HCT116 (cell line): ENCODE measurements at regions of chrX and their contacts with region 1.

Region 1: DNA sequence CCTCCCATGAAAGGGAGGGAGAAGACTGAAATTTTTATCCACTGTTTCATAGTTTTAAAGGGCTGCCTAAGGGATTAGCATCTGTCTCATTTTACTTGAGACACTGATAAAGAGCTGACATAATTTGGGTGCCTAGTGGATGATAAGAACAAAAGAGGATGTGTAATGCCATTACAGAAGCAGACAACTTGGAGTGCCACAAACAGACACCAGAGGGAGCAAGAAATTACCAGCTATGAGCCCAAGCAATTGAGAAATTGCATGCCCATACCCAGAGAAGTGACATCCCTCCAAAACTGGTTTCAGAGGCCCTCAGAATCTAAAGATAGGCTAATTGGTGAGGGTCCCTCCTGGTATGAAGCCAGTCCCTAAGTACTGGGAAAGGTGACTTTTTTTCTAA is 38.5 kb upstream of the POU3F4 start:
- DNase-seq: no peak
- ATAC-seq: no peak
- H3K4me3 ChIP-seq: no peak overlapping the region
- H3K27ac ChIP-seq: no peak overlapping the region
- H3K4me1 ChIP-seq: no peaks in the 10 kb centered on the region
- H3K27me3 ChIP-seq: no peaks in the 10 kb centered on the region
- CTCF ChIP-seq: peak in 1 of 3 experiments; percentile 24; a peak in 2 of 6 replicates
- POLR2A ChIP-seq: no peak
- RAD21 ChIP-seq: no peak

Region 2: GRCh38 chrX:82029571-82030218 is 1439.9 kb before region 1 on chrX:
- CTCF ChIA-PET with region 1: no interaction called
- POLR2A ChIA-PET with region 1: no interaction called
- RAD21 ChIA-PET with region 1: no interaction called
- intact Hi-C with region 1: no loop called
- DNase-seq: no peak
- ATAC-seq: no peak
- H3K4me3 ChIP-seq: no peak overlapping the region
- H3K27ac ChIP-seq: no peak overlapping the region
- H3K4me1 ChIP-seq: no peaks in the 10 kb centered on the region
- H3K27me3 ChIP-seq: no peaks in the 10 kb centered on the region
- CTCF ChIP-seq: no peak
- POLR2A ChIP-seq: no peak
- RAD21 ChIP-seq: no peak

Region 3: DNA sequence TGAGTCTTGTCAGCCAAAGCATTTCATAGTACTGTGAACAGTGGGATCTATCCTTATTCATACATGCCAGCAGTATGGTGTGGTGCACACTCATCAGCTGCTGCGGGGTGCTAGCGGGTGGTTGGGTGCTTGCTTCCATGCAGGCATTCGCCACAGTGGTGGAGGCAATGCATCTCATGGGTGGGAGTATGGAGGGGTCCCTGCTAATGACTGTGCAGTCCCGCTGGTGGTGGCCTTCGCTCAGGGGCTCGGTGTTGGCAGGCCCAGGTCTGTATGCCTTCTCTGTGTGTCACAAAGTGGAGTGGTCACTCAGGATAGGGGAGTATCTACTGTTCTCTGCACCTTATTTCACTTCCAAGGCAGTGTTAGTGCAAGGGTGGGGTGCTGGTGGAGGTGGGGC is 161.1 kb after region 1 on chrX:
- CTCF ChIA-PET with region 1: interaction called, 18 read pairs
- POLR2A ChIA-PET with region 1: no interaction called
- RAD21 ChIA-PET with region 1: no interaction called
- intact Hi-C with region 1: no loop called
- DNase-seq: no peak
- ATAC-seq: no peak
- H3K4me3 ChIP-seq: no peak overlapping the region
- H3K27ac ChIP-seq: no peak overlapping the region
- H3K4me1 ChIP-seq: no peaks in the 10 kb centered on the region
- H3K27me3 ChIP-seq: no peaks in the 10 kb centered on the region
- CTCF ChIP-seq: no peak
- POLR2A ChIP-seq: no peak
- RAD21 ChIP-seq: no peak

Region 4: DNA sequence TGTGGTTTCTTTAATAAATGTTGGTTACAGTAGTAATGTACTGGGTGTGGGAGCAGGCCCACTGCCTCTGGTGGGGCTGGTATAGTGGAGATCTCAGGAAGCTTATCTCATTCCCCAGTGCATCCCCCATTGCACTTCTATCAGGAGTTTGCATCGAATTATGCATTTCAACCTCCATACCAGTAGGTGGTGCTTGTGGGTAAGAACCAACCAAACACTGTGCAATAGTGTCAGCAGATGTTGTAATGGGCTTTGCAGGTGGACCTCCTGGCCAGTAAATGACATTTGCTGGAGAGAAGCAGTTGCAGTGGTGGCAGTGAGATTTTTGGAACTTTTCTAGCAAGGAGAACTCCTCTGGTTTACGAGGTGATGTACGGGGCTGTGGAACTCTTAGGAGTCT is 189.2 kb after region 1 on chrX:
- CTCF ChIA-PET with region 1: no interaction called
- POLR2A ChIA-PET with region 1: no interaction called
- RAD21 ChIA-PET with region 1: no interaction called
- intact Hi-C with region 1: no loop called
- DNase-seq: no peak
- ATAC-seq: no peak
- H3K4me3 ChIP-seq: no peak overlapping the region
- H3K27ac ChIP-seq: no peak overlapping the region
- H3K4me1 ChIP-seq: no peaks in the 10 kb centered on the region
- H3K27me3 ChIP-seq: no peaks in the 10 kb centered on the region
- CTCF ChIP-seq: no peak; a peak in 1 of 6 replicates
- POLR2A ChIP-seq: no peak
- RAD21 ChIP-seq: no peak

Region 5: DNA sequence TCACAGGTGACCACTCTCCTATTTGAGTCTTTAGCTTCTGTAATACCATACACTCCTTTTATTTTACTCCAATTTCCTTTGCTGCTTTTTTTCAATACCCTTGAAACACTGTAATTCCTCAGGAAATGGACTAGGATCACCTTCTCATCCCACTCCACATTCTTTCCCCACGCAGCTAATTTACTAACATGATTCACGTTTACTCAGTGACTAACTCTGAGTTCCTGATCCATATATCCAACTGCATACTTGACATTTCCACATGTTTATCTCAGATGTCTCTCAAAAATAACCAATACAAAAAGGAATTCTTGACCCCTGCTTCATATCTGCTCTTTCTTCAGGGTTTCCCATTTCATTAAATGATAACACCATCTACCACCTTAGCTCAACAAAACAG is 698.5 kb after region 1 on chrX:
- CTCF ChIA-PET with region 1: no interaction called
- POLR2A ChIA-PET with region 1: no interaction called
- RAD21 ChIA-PET with region 1: no interaction called
- intact Hi-C with region 1: no loop called
- DNase-seq: no peak
- ATAC-seq: no peak
- H3K4me3 ChIP-seq: no peak overlapping the region
- H3K27ac ChIP-seq: no peak overlapping the region
- H3K4me1 ChIP-seq: no peaks in the 10 kb centered on the region
- H3K27me3 ChIP-seq: no peaks in the 10 kb centered on the region
- CTCF ChIP-seq: no peak
- POLR2A ChIP-seq: no peak
- RAD21 ChIP-seq: no peak